Right ventricle myocardium inferior (tissue), 1 donor: ENCODE measurements at regions of chr2 and their contacts with region 1.

Region 1: GRCh38 chr2:20635675-20636584 is 15.0 kb downstream of the HS1BP3 start:
- DNase-seq: peak; percentile 91
- ATAC-seq: peak; percentile 87

Region 2: GRCh38 chr2:20242060-20243006 is 393.6 kb before region 1 on chr2:
- intact Hi-C with region 1: no loop called
- DNase-seq: no peak
- ATAC-seq: peak; percentile 39

Region 3: DNA sequence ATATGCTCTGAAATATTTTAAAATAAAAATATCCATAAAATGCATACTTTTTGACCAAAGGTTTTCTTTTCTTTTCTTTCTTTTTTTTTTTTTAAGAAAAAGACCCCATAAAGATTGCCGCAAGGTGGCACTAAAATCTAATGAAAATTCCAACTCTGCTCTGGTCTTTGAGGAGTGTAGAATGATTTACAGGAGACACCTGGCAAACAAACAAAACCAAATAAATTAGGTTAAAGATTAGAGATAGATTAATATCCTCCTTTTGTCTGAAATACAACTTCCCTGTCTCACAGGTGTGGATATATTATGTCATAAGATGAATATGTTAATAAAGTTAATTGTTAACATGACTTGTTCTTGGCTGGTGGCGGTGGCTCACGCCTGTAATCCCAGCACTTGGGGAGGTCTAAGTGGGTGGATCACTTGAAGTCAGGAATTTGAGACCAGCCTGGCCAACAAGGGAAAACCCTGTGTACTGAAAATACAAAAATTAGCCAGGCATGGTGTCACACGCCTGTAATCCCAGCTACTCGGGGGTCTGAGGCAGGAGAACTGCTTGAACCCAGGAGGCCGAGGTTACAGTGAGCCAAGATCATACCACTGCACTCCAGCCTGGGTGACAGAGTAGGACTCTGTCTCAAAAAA is 192.5 kb before region 1 on chr2:
- intact Hi-C with region 1: loop called (anchors 1 kb)
- DNase-seq: no peak
- ATAC-seq: no peak

Region 4: DNA sequence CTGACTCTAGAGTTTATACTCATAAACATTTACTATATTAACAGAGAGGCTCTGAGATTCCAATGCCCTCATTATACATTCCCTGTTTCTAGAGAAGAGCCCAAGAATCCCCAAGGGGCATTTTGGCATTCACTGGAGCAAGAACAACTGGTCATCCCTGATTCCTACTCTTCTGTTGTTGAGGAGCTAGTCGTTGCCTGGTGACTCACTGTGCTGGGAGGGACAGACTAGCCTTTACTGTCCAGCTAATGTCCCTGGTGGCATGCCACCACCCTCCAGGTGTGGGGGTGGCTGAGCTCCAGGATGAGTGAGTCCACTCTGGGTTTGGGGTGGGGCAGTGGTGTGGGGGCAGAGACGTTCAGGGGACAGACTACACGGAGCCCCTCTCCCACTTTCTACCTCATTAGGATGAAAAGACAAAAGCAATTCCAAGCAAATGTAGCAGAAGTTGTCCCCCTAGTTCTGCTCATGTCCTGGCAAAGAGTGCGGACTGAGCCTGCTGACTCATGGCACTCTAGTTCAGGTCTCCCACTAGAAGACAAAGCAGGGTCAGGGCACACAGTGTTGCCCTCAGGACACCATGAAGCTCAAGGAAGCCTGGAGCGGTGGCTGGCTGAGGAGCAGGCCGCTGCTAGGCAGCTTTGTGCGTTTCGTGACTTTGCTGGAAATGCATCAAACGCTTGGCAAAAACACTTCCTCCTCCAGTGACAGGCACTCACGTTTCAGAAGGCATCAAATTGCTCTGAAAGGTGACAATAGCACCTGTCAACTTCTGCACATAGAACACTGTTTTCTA is 139.7 kb before region 1 on chr2:
- intact Hi-C with region 1: no loop called
- DNase-seq: no peak
- ATAC-seq: no peak

Region 5: DNA sequence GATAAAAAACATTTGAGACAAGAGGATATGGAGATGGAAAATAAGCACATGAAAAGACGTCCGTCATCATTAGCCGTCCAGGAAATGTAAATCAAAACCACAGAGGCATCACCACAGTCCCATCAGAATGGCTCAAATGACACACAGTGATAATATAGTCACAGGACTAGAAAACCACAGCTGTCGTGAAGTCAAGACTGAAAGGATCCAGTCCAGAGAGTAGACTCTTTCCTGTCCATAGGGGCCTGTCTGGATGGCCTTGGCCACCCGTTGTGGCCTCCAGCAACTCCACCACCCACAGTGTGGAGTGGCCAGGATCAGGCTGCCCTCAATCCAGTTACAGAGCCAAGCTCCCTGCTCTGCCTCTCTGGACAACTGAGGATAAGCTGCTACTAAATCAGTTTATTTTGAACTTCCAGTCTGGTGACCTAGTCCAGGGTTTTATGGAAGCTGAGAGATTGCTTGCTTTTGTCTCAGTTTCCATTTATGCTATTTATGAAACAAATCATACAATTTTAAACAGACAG is 128.7 kb before region 1 on chr2:
- intact Hi-C with region 1: loop called (anchors 5 kb)
- DNase-seq: no peak
- ATAC-seq: no peak

Region 6: GRCh38 chr2:20532634-20533437 is 103.1 kb before region 1 on chr2:
- intact Hi-C with region 1: loop called (anchors 5 kb)
- DNase-seq: no peak
- ATAC-seq: no peak

Region 7: DNA sequence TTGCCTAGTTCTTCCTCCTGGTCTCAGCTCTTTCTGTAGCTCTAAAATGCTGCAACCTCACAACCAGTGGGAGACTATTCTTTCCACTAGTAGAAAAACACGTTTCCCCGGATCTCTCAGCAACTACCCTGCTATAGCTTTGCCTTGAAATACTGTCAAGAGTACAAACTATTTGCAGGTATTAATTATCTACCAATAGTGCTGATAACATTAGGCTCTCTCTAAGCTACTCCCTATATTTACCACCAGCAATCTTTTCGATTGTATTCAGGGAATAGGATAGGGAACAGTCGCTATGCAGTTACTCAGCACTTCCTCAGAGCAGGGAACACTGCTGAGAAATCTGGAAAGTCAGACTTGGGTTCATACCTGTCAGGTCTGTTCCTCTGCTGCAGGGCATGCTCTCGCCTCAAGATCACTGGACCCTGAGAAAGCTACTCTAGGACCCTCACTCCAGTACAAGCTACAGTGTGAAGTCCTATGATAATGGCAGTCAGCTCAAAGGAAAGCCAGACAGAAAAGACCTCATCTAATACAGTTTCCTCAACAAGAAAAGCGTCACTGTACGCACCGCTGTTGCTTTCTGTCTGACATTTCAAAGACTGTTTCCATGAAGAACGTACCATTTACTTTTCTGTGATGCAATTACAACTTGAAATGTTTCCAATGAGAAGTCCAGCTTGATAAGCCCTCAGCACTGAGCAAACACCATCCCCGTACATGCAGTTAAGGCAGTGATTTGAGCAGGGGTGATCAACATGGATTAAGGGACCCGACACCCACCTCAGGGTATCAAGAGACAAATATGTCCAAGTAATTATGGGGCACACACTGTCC is 53.7 kb after region 1 on chr2:
- intact Hi-C with region 1: no loop called
- DNase-seq: no peak
- ATAC-seq: no peak